Activated T-helper 1 cell treated with anti-CD3 and anti-CD28 coated beads, Interleukin-12 subunit alpha, Interleukin-12 subunit beta, Interleukin-2, Interleukin-4 antibody, amounts not matched to agents 30 ng/mL and 10 ng/mL and 1 ng/mL, durations not matched to agents 14 hours and 24 hours and 36 hours (primary cell): ENCODE measurements at regions of chr3 and their contacts with region 1.

Region 1: DNA sequence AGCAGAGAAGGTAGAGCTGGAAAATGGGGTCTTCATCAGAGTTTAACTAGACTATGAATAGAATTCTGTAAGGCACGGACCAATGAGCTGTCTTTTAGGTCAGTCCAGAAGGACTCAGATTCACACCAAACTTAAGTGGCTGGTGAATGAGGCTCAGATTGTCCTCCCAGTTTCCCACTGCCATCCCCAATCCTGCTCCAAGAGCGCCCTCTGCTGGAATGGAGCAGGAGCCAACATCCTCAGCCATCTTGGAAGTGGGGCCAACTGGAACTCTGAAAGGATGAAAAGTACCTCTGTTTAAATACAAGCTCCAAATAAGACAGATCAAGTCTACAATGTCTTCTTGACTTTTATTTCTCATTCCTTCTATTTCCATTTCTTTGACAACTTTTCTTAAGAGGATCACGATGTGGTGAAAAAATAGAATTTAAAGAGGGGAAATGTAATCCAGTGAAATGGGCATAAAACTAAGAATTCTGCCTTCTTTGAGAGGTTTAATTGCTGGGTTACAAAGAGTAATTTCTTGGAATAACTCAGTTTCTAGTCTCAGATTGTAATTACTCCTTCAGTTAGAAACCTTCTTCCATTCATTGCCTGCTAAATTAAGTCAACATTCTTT is 217.1 kb upstream of the TPRG1 start:
- DNase-seq: peak; percentile 68
- H3K4me3 Mint-ChIP-seq: no peak overlapping the region
- H3K27ac Mint-ChIP-seq: no peak overlapping the region
- H3K4me1 Mint-ChIP-seq: peaks cover 46% of the 10 kb centered on the region
- H3K27me3 Mint-ChIP-seq: no peaks in the 10 kb centered on the region

Region 2: GRCh38 chr3:187986514-187986934 is 968.2 kb before region 1 on chr3:
- intact Hi-C with region 1: loop called (anchors 5 kb)
- DNase-seq: peak; percentile 34
- H3K4me3 Mint-ChIP-seq: peak overlapping the region; percentile 21
- H3K27ac Mint-ChIP-seq: peak overlapping the region; percentile 82
- H3K4me1 Mint-ChIP-seq: peaks cover 70% of the 10 kb centered on the region
- H3K27me3 Mint-ChIP-seq: no peaks in the 10 kb centered on the region

Region 3: GRCh38 chr3:188320757-188321156 is 633.9 kb before region 1 on chr3:
- intact Hi-C with region 1: loop called (anchors 5 kb)
- DNase-seq: no peak
- H3K4me3 Mint-ChIP-seq: no peak overlapping the region
- H3K27ac Mint-ChIP-seq: no peak overlapping the region
- H3K4me1 Mint-ChIP-seq: peaks cover 49% of the 10 kb centered on the region
- H3K27me3 Mint-ChIP-seq: peaks cover 1% of the 10 kb centered on the region

Region 4: GRCh38 chr3:188683032-188683521 is 271.6 kb before region 1 on chr3:
- intact Hi-C with region 1: loop called (anchors 5 kb)
- DNase-seq: no peak
- H3K4me3 Mint-ChIP-seq: no peak overlapping the region
- H3K27ac Mint-ChIP-seq: peak overlapping the region; percentile 74
- H3K4me1 Mint-ChIP-seq: peaks cover 28% of the 10 kb centered on the region
- H3K27me3 Mint-ChIP-seq: no peaks in the 10 kb centered on the region

Region 5: GRCh38 chr3:188830893-188831292 is 123.8 kb before region 1 on chr3:
- intact Hi-C with region 1: loop called (anchors 1 kb)
- DNase-seq: no peak
- H3K4me3 Mint-ChIP-seq: no peak overlapping the region
- H3K27ac Mint-ChIP-seq: no peak overlapping the region
- H3K4me1 Mint-ChIP-seq: peaks cover 10% of the 10 kb centered on the region
- H3K27me3 Mint-ChIP-seq: no peaks in the 10 kb centered on the region

Region 6: DNA sequence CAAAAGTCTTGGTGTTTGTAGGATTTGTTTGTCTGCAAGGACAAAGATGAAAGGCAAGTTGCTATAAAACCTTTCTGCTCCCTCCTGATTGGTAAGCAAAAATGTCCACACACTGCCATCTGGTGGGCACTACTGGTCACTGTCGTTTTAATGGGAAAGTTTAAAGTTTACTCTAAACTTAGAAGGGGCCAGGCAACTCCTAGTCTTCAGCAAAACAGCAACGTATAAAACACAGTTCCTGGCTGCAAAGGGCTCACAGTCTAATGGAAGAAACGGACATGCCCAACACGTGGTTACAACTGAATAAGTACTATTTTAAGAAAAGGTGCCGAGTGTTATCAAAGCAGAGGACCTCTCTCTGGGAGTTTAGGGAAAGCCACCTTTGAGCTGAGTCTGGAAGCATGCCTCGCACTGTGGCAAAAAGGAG is 193.4 kb after region 1 on chr3:
- intact Hi-C with region 1: loop called (anchors 1 kb)
- DNase-seq: peak; percentile 43
- H3K4me3 Mint-ChIP-seq: no peak overlapping the region
- H3K27ac Mint-ChIP-seq: no peak overlapping the region
- H3K4me1 Mint-ChIP-seq: peaks cover 47% of the 10 kb centered on the region
- H3K27me3 Mint-ChIP-seq: peaks cover 6% of the 10 kb centered on the region